A549 (cell line): ENCODE measurements at regions of chr1 and their contacts with region 1.

Region 1: GRCh38 chr1:205907794-205908193 is 35.5 kb downstream of the SLC26A9 start:
- DNase-seq: peak in 1 of 2 experiments; percentile 52
- ATAC-seq: peak; percentile 90 to 92; a peak in 5 of 6 replicates
- H3K4me3 ChIP-seq: no peak overlapping the region
- H3K27ac ChIP-seq: peak overlapping the region; percentile 26 to 57; a peak in 2 of 6 replicates
- H3K4me1 ChIP-seq: peaks cover 7% of the 10 kb centered on the region; the same call in 2 of the 3 replicates
- CTCF ChIP-seq: peak; percentile 68
- EP300 ChIP-seq: no peak
- POLR2A ChIP-seq: no peak
- RAD21 ChIP-seq: peak; percentile 63 to 77

Region 2: DNA sequence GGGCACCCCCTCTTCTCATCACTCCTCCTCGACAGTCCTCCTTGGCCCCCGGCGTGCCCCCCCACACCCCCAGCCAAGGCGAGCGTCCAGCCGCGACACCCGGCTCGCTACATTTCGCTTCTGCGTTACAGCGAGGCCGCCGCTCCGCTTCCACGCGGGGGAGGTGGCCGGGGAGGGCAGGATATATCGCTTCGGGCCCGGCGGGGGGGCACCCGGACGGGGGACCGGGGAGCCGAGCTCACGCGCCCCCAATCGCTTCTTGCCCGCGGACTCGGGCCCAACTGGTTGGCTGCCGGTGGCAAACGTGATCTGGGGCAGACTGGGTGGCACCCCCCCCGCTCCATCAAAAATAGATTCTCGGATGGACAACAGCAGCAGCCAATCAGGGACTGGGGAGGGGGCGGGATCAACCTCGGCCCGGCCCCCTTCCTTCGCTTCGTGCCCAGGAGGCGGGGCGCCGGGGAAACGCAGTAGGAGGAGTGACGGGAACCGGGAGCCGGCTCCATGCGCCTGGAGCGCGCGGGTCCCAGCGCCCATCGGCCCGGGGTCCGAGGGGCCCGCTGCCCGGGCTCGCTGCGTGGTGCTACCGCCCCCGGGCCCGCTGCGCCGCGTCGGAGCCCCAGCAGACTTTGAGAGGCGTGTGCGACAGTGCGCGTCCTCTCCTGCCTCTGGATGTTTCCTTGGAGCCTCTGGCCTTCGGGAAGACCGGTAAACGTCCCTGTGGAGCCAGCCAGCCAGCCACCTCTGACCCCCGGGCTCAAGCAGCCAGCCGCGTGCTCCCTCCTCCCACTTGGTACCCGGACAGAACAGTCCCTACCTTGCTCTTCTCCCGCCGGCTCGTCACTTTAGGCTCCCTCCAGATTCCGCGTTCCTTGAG is 94.7 kb before region 1 on chr1 and contains the start of gene SLC41A1:
- CTCF ChIA-PET with region 1: interaction called, 10 read pairs
- POLR2A ChIA-PET with region 1: no interaction called
- DNase-seq: peak; percentile 90 to 95
- ATAC-seq: peak; percentile 94 to 95
- H3K4me3 ChIP-seq: peak within 1 kb of the TSS; percentile 76
- H3K27ac ChIP-seq: peak within 1 kb of the TSS; percentile 81 to 98
- H3K4me1 ChIP-seq: peaks cover 19% of the 10 kb centered on the region
- CTCF ChIP-seq: no peak
- EP300 ChIP-seq: no peak
- POLR2A ChIP-seq: peak; percentile 56
- RAD21 ChIP-seq: no peak
- polyA plus RNA-seq, gene SLC41A1: 23.5 and 26.0 TPM in 2 replicates

Region 3: GRCh38 chr1:205896320-205896719 is 11.5 kb before region 1 on chr1:
- CTCF ChIA-PET with region 1: interaction called, 11 read pairs
- POLR2A ChIA-PET with region 1: no interaction called
- DNase-seq: no peak
- ATAC-seq: no peak
- H3K4me3 ChIP-seq: no peak overlapping the region
- H3K27ac ChIP-seq: no peak overlapping the region
- H3K4me1 ChIP-seq: no peaks in the 10 kb centered on the region
- CTCF ChIP-seq: no peak
- EP300 ChIP-seq: no peak
- POLR2A ChIP-seq: no peak
- RAD21 ChIP-seq: no peak